GM12878 (cell line): ENCODE measurements at regions of chr1 and their contacts with region 1.

Region 1: GRCh38 chr1:74714429-74715235 is 18.2 kb downstream of the CRYZ start:
- DNase-seq: no peak
- ATAC-seq: peak; percentile 83
- H3K4me3 ChIP-seq: peak overlapping the region; percentile 30; the same call in 1 of the 2 replicates
- H3K27ac ChIP-seq: peak overlapping the region; percentile 57
- H3K4me1 ChIP-seq: peaks cover 26% of the 10 kb centered on the region
- H3K27me3 ChIP-seq: no peaks in the 10 kb centered on the region
- CTCF ChIP-seq: no peak
- EP300 ChIP-seq: no peak; a peak in 1 of 4 replicates
- POLR2A ChIP-seq: no peak
- RAD21 ChIP-seq: no peak

Region 2: GRCh38 chr1:74620242-74620641 is 94.4 kb before region 1 on chr1:
- CTCF ChIA-PET with region 1: no interaction called
- POLR2A ChIA-PET with region 1: no interaction called
- RAD21 ChIA-PET with region 1: no interaction called
- SMC1A ChIA-PET with region 1: no interaction called
- in situ Hi-C with region 1: no loop called
- intact Hi-C with region 1: no loop called
- DNase-seq: no peak
- ATAC-seq: no peak
- H3K4me3 ChIP-seq: no peak overlapping the region
- H3K27ac ChIP-seq: no peak overlapping the region
- H3K4me1 ChIP-seq: no peaks in the 10 kb centered on the region
- H3K27me3 ChIP-seq: no peaks in the 10 kb centered on the region
- CTCF ChIP-seq: no peak
- EP300 ChIP-seq: no peak
- POLR2A ChIP-seq: no peak
- RAD21 ChIP-seq: no peak

Region 3: DNA sequence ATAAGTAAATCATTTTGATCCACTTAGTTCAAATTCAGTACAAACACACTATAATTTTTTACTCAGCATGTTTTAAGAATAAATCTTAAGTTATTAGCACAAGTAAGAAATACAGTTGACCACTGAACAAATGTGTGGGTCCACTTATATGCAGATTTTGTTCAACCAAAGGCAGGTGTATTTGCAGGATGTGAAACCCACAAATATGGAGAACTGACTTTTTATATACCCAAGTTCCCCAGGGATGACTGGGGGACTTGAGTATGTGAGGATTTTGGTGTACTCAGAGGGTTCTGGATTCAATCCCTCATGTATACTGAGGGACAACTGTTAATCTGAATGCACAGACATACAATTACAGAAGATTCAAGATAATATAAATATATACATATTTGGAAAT is 15.3 kb before region 1 on chr1:
- CTCF ChIA-PET with region 1: interaction called, 4 read pairs
- POLR2A ChIA-PET with region 1: interaction called, 4 read pairs
- RAD21 ChIA-PET with region 1: interaction called, 18 read pairs
- SMC1A ChIA-PET with region 1: interaction called, 36 read pairs
- in situ Hi-C with region 1: no loop called
- intact Hi-C with region 1: no loop called
- DNase-seq: no peak
- ATAC-seq: peak; percentile 38; the same call in 2 of the 3 replicates
- H3K4me3 ChIP-seq: no peak overlapping the region
- H3K27ac ChIP-seq: no peak overlapping the region; the same call in 1 of the 2 replicates
- H3K4me1 ChIP-seq: peaks cover 16% of the 10 kb centered on the region; the same call in 1 of the 2 replicates
- H3K27me3 ChIP-seq: no peaks in the 10 kb centered on the region
- CTCF ChIP-seq: no peak
- EP300 ChIP-seq: no peak
- POLR2A ChIP-seq: no peak
- RAD21 ChIP-seq: no peak

Region 4: DNA sequence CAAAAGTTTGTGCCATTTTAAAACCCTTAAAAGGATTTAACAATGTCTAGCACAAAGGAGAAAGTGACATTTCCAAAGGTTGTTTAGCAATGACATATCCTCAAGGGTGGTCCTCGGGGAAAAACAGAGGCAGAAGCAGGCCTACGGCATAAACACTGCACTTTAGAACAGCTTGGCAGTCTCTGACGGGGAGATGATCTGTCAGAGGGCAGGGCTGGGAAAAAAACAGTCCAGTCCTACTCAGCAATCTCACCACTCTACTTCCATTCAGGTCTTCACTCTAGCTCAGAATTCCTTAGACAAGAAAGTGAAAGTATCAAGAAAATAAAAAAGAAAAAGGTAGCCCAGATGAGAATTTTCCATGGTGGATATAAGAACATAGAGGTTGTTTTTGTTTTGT is 14.1 kb after region 1 on chr1:
- CTCF ChIA-PET with region 1: interaction called, 56 read pairs
- POLR2A ChIA-PET with region 1: interaction called, 35 read pairs
- RAD21 ChIA-PET with region 1: interaction called, 67 read pairs
- SMC1A ChIA-PET with region 1: interaction called, 77 read pairs
- in situ Hi-C with region 1: no loop called
- intact Hi-C with region 1: no loop called
- DNase-seq: no peak
- ATAC-seq: no peak
- H3K4me3 ChIP-seq: peak overlapping the region; percentile 34; the same call in 1 of the 2 replicates
- H3K27ac ChIP-seq: no peak overlapping the region
- H3K4me1 ChIP-seq: peaks cover 10% of the 10 kb centered on the region; the same call in 1 of the 2 replicates
- H3K27me3 ChIP-seq: no peaks in the 10 kb centered on the region
- CTCF ChIP-seq: no peak
- EP300 ChIP-seq: no peak
- POLR2A ChIP-seq: no peak
- RAD21 ChIP-seq: no peak

Region 5: DNA sequence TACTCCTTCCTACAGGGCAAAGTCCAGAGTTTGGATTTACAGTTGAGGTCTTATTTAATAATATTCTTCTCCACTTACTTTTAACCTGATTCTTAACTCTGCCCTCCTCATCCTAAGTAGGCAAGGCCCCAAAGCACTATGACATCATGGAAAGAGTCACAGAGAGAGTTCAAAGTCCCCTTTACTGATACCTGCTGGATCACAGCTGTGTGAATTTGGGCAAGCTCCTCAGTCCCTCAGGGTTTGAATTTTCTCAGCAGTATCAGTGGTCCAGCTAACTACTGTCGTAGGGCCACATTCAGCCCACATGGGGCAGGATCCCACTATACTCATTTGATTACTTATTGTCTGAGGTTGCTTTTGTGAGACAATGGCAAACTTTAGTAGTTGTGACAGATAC is 34.3 kb after region 1 on chr1:
- CTCF ChIA-PET with region 1: interaction called, 4 read pairs
- POLR2A ChIA-PET with region 1: interaction called, 5 read pairs
- RAD21 ChIA-PET with region 1: interaction called, 23 read pairs
- SMC1A ChIA-PET with region 1: interaction called, 5 read pairs
- in situ Hi-C with region 1: no loop called
- intact Hi-C with region 1: no loop called
- DNase-seq: no peak
- ATAC-seq: peak; percentile 96
- H3K4me3 ChIP-seq: no peak overlapping the region
- H3K27ac ChIP-seq: no peak overlapping the region
- H3K4me1 ChIP-seq: no peaks in the 10 kb centered on the region
- H3K27me3 ChIP-seq: no peaks in the 10 kb centered on the region
- CTCF ChIP-seq: no peak
- EP300 ChIP-seq: no peak; a peak in 1 of 4 replicates
- POLR2A ChIP-seq: no peak
- RAD21 ChIP-seq: no peak

Region 6: GRCh38 chr1:74790453-74790852 is 75.8 kb after region 1 on chr1:
- CTCF ChIA-PET with region 1: no interaction called
- POLR2A ChIA-PET with region 1: no interaction called
- RAD21 ChIA-PET with region 1: no interaction called
- SMC1A ChIA-PET with region 1: no interaction called
- in situ Hi-C with region 1: no loop called
- intact Hi-C with region 1: no loop called
- DNase-seq: no peak
- ATAC-seq: no peak
- H3K4me3 ChIP-seq: no peak overlapping the region
- H3K27ac ChIP-seq: no peak overlapping the region
- H3K4me1 ChIP-seq: no peaks in the 10 kb centered on the region
- H3K27me3 ChIP-seq: no peaks in the 10 kb centered on the region; a peak in 1 of 4 replicates
- CTCF ChIP-seq: no peak
- EP300 ChIP-seq: no peak
- POLR2A ChIP-seq: no peak
- RAD21 ChIP-seq: no peak